ENCODE measurements at regions of chr1 and their contacts with region 1.

Region 1: GRCh38 chr1:33036526-33037503 is at the start of gene AK2:
- H3K4me3 Mint-ChIP-seq: peak within 1 kb of the TSS; percentile 94
- H3K27ac Mint-ChIP-seq: peak within 1 kb of the TSS; percentile 93
- H3K4me1 Mint-ChIP-seq: peaks cover 77% of the 10 kb centered on the region
- H3K27me3 Mint-ChIP-seq: no peaks in the 10 kb centered on the region

Region 2: GRCh38 chr1:33022650-33023200 is 14.1 kb before region 1 on chr1:
- intact Hi-C with region 1: no loop called
- H3K4me3 Mint-ChIP-seq: no peak overlapping the region
- H3K27ac Mint-ChIP-seq: no peak overlapping the region
- H3K4me1 Mint-ChIP-seq: peaks cover 34% of the 10 kb centered on the region
- H3K27me3 Mint-ChIP-seq: no peaks in the 10 kb centered on the region

Region 3: GRCh38 chr1:33055210-33056008 is 18.6 kb after region 1 on chr1:
- intact Hi-C with region 1: loop called (anchors 1 kb)
- H3K4me3 Mint-ChIP-seq: no peak overlapping the region
- H3K27ac Mint-ChIP-seq: peak overlapping the region; percentile 7
- H3K4me1 Mint-ChIP-seq: peaks cover 31% of the 10 kb centered on the region
- H3K27me3 Mint-ChIP-seq: no peaks in the 10 kb centered on the region